Activated B cell treated with CpG ODN at 0.5 μM for 24 hours (primary cell): ENCODE measurements at regions of chr2 and their contacts with region 1.

Region 1: GRCh38 chr2:121649596-121650314 is 493 bp upstream of the CLASP1 start:
- DNase-seq: peak; percentile 87
- ATAC-seq: peak; percentile 93
- H3K4me3 Mint-ChIP-seq: peak overlapping the region; percentile 100
- H3K27ac Mint-ChIP-seq: peak overlapping the region; percentile 100
- H3K4me1 Mint-ChIP-seq: peaks cover 51% of the 10 kb centered on the region
- H3K27me3 Mint-ChIP-seq: no peaks in the 10 kb centered on the region
- CTCF ChIP-seq: no peak

Region 2: GRCh38 chr2:119678998-119679710 is 1970.6 kb before region 1 on chr2 and contains the start of gene TMEM177:
- CTCF ChIA-PET with region 1: no interaction called
- POLR2A ChIA-PET with region 1: no interaction called
- intact Hi-C with region 1: loop called (anchors 5 kb)
- DNase-seq: peak; percentile 90
- ATAC-seq: peak; percentile 96
- H3K4me3 Mint-ChIP-seq: peak within 1 kb of the TSS; percentile 90
- H3K27ac Mint-ChIP-seq: peak within 1 kb of the TSS; percentile 68
- H3K4me1 Mint-ChIP-seq: peaks cover 23% of the 10 kb centered on the region
- H3K27me3 Mint-ChIP-seq: no peaks in the 10 kb centered on the region
- CTCF ChIP-seq: no peak
- total RNA-seq, gene TMEM177: 9.0 and 10.3 TPM in 2 replicates

Region 3: GRCh38 chr2:121596221-121597080 is 53.3 kb before region 1 on chr2:
- CTCF ChIA-PET with region 1: no interaction called
- POLR2A ChIA-PET with region 1: interaction called, 17 read pairs
- intact Hi-C with region 1: loop called (anchors 1 kb)
- DNase-seq: no peak
- ATAC-seq: peak; percentile 94
- H3K4me3 Mint-ChIP-seq: peak overlapping the region; percentile 74
- H3K27ac Mint-ChIP-seq: peak overlapping the region; percentile 87
- H3K4me1 Mint-ChIP-seq: peaks cover 48% of the 10 kb centered on the region
- H3K27me3 Mint-ChIP-seq: no peaks in the 10 kb centered on the region
- CTCF ChIP-seq: no peak

Region 4: DNA sequence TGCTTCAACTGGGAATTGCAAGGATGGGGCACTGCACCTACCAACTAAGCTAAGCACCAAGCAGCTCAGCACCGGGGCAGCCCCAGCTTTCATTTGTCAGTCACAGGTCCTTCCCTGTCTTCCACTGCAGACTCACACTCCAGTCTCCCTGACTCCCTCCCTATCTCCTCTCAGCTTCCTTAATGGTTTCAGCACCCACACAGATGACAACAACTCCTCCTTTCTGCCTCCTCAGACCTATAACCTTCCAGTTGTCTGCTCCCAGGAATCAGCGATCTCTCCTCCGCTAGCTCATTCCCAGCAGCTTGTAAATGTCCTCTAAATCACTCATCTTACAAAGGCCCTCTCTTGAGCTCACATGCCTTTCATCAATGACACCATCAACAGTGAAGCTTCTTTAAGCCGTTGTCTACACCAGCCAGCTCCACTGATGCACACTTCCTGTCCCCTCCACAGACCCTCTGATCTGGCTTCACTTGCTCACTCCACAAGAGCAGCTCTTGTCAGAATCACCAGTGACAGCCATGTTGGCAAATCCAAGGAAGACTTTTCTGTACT is 32.6 kb before region 1 on chr2:
- CTCF ChIA-PET with region 1: interaction called, 3 read pairs
- POLR2A ChIA-PET with region 1: interaction called, 3 read pairs
- intact Hi-C with region 1: loop called (anchors 2 kb)
- DNase-seq: no peak
- ATAC-seq: peak; percentile 64
- H3K4me3 Mint-ChIP-seq: no peak overlapping the region
- H3K27ac Mint-ChIP-seq: no peak overlapping the region
- H3K4me1 Mint-ChIP-seq: peaks cover 5% of the 10 kb centered on the region
- H3K27me3 Mint-ChIP-seq: no peaks in the 10 kb centered on the region
- CTCF ChIP-seq: no peak

Region 5: DNA sequence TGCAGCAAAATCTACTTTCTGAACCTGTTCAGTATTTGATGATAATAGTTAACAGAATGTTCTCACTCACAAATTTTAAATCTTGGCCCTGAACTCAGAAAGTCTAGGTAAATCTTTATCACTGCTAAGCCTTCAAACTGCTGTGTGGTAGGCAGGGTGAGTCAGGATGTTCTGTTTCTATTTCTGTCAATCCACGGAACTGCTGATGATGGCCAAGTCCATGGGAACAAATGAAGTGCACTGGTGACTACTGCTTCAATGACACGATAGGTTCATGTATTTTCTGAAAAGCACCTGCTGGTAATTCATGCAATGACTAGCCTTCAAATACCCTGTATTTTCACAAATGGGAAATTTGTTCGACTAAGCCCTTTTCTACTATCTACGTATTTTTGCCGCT is 72.7 kb after region 1 on chr2:
- CTCF ChIA-PET with region 1: no interaction called
- POLR2A ChIA-PET with region 1: no interaction called
- intact Hi-C with region 1: loop called (anchors 1 kb)
- DNase-seq: no peak
- ATAC-seq: no peak
- H3K4me3 Mint-ChIP-seq: no peak overlapping the region
- H3K27ac Mint-ChIP-seq: no peak overlapping the region
- H3K4me1 Mint-ChIP-seq: peaks cover 3% of the 10 kb centered on the region
- H3K27me3 Mint-ChIP-seq: no peaks in the 10 kb centered on the region
- CTCF ChIP-seq: no peak

Region 6: GRCh38 chr2:121755236-121756111 is 105.7 kb after region 1 on chr2 and contains the start of gene TSN:
- CTCF ChIA-PET with region 1: no interaction called
- POLR2A ChIA-PET with region 1: interaction called, 13 read pairs
- intact Hi-C with region 1: loop called (anchors 1 kb)
- DNase-seq: peak; percentile 96
- ATAC-seq: peak; percentile 99
- H3K4me3 Mint-ChIP-seq: peak within 1 kb of the TSS; percentile 93
- H3K27ac Mint-ChIP-seq: peak within 1 kb of the TSS; percentile 80
- H3K4me1 Mint-ChIP-seq: peaks cover 34% of the 10 kb centered on the region
- H3K27me3 Mint-ChIP-seq: no peaks in the 10 kb centered on the region
- CTCF ChIP-seq: no peak
- total RNA-seq, gene TSN: 60.8 and 61.3 TPM in 2 replicates